B cell (primary cell): ENCODE measurements at regions of chr4 and their contacts with region 1.

Region 1: DNA sequence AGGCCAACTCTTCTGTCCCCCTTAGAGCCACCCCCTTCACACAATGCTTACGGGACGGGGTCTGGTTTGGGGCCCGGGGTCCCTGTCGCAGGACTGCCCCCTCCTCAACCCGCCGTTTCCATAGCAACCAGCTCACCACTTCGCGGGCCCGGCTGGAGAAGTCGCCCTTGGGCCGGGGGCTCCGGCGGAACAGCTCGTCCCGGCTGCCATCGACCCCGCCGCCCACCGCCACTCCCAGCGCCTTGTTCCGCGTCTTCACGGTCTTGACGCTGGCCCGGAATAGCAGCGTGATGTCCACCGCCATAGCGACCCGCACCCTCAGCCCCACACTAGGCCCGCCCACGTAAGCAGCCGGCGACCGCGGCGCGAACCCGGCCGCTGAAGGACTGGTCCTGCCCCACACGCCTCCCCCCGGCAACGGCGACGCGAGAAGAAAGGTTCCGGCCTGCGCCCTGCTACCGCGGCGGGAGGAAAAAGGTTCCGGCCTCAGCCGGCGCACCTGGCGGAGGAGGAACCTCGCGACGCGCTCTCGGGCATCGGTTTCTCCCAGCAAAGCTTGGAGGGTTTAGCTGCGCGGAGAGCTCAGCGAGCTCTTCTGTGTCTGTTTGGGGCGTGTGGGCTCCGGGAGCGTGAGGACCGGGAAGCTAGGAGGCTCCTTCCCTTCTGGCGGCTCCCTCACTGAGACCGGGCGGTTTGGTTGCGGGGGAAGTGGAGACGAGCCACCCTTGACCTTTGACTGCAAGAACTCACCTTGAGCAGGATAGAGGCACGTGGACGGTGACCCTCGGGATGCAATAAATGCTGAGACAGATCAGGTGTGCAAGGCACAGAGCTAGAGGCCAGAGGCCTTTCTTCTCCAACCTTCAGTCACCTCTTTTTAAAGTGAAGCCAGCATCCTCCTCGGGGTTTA is at the start of gene STX18:
- DNase-seq: peak; percentile 94
- ATAC-seq: peak; percentile 92
- H3K4me3 ChIP-seq: peak within 1 kb of the TSS; percentile 69 to 96 (median 90)
- H3K4me3 Mint-ChIP-seq: peak within 1 kb of the TSS; percentile 96
- H3K27ac ChIP-seq: peak within 1 kb of the TSS; percentile 77 to 93
- H3K27ac Mint-ChIP-seq: peak within 1 kb of the TSS; percentile 94
- H3K4me1 ChIP-seq: peaks cover 23 to 26% of the 10 kb centered on the region in 2 donors
- H3K4me1 Mint-ChIP-seq: peaks cover 42% of the 10 kb centered on the region
- H3K27me3 ChIP-seq: no peaks in the 10 kb centered on the region
- H3K27me3 Mint-ChIP-seq: no peaks in the 10 kb centered on the region
- CTCF ChIP-seq: peak; percentile 21
- total RNA-seq, gene STX18: 30.0 and 33.6 TPM in 2 replicates

Region 2: DNA sequence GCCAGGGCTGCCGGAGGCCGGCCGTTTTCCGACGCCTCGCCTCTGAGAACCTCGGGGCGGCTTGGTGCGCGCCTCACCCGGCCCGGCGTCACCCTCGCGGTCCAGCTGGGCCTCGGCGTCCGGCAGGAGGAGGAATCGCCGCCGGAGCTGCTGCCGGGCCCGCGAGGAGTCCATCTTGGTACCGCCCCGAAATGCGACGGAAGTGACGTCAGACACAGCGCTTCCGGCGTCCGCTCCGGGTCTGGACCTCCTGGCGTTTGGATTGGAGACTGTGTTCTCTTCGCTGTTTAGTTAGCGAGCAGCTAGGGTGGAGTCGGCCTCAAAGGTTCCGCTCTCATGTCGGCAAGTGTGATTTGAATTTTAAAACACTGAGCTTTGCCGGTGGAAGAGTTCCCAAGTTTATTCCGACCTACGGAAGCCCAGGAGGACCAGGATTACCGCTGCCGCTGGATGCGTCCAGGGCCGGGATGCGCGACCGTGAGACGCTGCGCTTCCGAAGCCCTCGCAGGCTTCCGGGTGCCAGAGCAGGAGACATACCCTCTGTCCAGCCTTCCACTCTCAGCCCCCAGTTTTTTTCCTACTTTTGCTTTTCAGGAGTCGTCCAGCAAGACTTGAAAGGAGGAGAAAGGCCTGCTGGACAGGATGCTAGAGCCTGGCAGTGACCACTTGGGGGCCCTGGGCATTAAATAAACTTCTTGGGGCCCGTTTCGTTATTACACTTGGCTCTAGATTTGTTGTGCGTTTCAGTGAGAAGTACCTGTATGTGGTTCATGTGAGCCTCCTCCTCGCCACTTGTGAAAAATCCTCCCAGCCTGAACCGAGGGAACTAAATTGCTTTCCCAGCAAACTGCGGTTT is 293.7 kb before region 1 on chr4 and contains the start of gene TMEM128:
- CTCF ChIA-PET with region 1: no interaction called
- POLR2A ChIA-PET with region 1: interaction called, 4 read pairs
- intact Hi-C with region 1: loop called (anchors 2 kb)
- DNase-seq: peak; percentile 96
- ATAC-seq: peak; percentile 96
- H3K4me3 ChIP-seq: peak within 1 kb of the TSS; percentile 67 to 98 (median 84)
- H3K4me3 Mint-ChIP-seq: peak within 1 kb of the TSS; percentile 88
- H3K27ac ChIP-seq: peak within 1 kb of the TSS; percentile 88
- H3K27ac Mint-ChIP-seq: peak within 1 kb of the TSS; percentile 97
- H3K4me1 ChIP-seq: peaks cover 14 to 17% of the 10 kb centered on the region in 2 donors
- H3K4me1 Mint-ChIP-seq: peaks cover 21% of the 10 kb centered on the region
- H3K27me3 ChIP-seq: peaks cover 0 to 4% (median 1%) of the 10 kb centered on the region in 4 experiments
- H3K27me3 Mint-ChIP-seq: peaks cover under 1% of the 10 kb centered on the region
- CTCF ChIP-seq: no peak
- total RNA-seq, gene TMEM128: 16.3 and 17.3 TPM in 2 replicates

Region 3: GRCh38 chr4:4289941-4290850 is 251.7 kb before region 1 on chr4 and contains the starts of genes LYAR and ZBTB49:
- CTCF ChIA-PET with region 1: no interaction called
- POLR2A ChIA-PET with region 1: interaction called, 3 read pairs
- intact Hi-C with region 1: loop called (anchors 1 kb)
- DNase-seq: peak; percentile 93
- ATAC-seq: peak; percentile 92
- H3K4me3 ChIP-seq: peak within 1 kb of the TSS; percentile 63 to 88 (median 74)
- H3K4me3 Mint-ChIP-seq: peak within 1 kb of the TSS; percentile 98
- H3K27ac ChIP-seq: peak within 1 kb of the TSS; percentile 47 to 76
- H3K27ac Mint-ChIP-seq: peak within 1 kb of the TSS; percentile 92
- H3K4me1 ChIP-seq: peaks cover 19 to 22% of the 10 kb centered on the region in 2 donors
- H3K4me1 Mint-ChIP-seq: peaks cover 46% of the 10 kb centered on the region
- H3K27me3 ChIP-seq: no peaks in the 10 kb centered on the region
- H3K27me3 Mint-ChIP-seq: no peaks in the 10 kb centered on the region
- CTCF ChIP-seq: no peak
- total RNA-seq, gene LYAR: 11.4 and 11.5 TPM in 2 replicates
- total RNA-seq, gene ZBTB49: 16.9 and 17.8 TPM in 2 replicates

Region 4: DNA sequence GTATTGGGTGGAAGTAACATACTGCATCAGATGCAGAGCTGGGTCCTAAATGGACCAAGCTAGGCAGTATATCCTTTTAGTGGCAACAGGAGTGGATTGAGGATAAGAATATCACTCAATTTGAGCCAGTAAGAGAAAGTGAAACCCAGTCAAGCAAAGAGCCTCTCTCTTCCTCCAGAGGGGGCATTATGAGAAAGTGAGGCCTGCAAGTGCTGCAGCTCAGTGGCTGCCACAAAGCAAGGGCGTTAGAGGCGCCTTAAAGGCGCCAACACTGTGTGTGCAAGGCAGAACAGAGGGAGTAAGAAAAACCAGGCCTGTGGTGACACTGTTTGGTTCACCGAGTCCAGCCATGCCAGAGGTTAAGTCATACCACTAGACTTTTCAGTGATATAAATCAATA is 17.6 kb before region 1 on chr4:
- CTCF ChIA-PET with region 1: interaction called, 4 read pairs
- POLR2A ChIA-PET with region 1: interaction called, 3 read pairs
- intact Hi-C with region 1: loop called (anchors 1 kb)
- DNase-seq: peak; percentile 75
- ATAC-seq: peak; percentile 96
- H3K4me3 ChIP-seq: peak overlapping the region in 1 of 5 experiments; percentile 31
- H3K4me3 Mint-ChIP-seq: peak overlapping the region; percentile 55
- H3K27ac ChIP-seq: peak overlapping the region; percentile 11 to 72
- H3K27ac Mint-ChIP-seq: peak overlapping the region; percentile 84
- H3K4me1 ChIP-seq: peaks cover 17% of the 10 kb centered on the region in 2 donors
- H3K4me1 Mint-ChIP-seq: peaks cover 40% of the 10 kb centered on the region
- H3K27me3 ChIP-seq: no peaks in the 10 kb centered on the region
- H3K27me3 Mint-ChIP-seq: no peaks in the 10 kb centered on the region
- CTCF ChIP-seq: no peak

Region 5: GRCh38 chr4:4575273-4576211 is 33.6 kb after region 1 on chr4:
- CTCF ChIA-PET with region 1: interaction called, 10 read pairs
- POLR2A ChIA-PET with region 1: no interaction called
- intact Hi-C with region 1: loop called (anchors 1 kb)
- DNase-seq: peak; percentile 81
- ATAC-seq: peak; percentile 83
- H3K4me3 ChIP-seq: peak overlapping the region; percentile 46 to 76 (median 65)
- H3K4me3 Mint-ChIP-seq: peak overlapping the region; percentile 85
- H3K27ac ChIP-seq: peak overlapping the region; percentile 37 to 72
- H3K27ac Mint-ChIP-seq: peak overlapping the region; percentile 81
- H3K4me1 ChIP-seq: peaks cover 11 to 12% of the 10 kb centered on the region in 2 donors
- H3K4me1 Mint-ChIP-seq: peaks cover 16% of the 10 kb centered on the region
- H3K27me3 ChIP-seq: no peaks in the 10 kb centered on the region
- H3K27me3 Mint-ChIP-seq: no peaks in the 10 kb centered on the region
- CTCF ChIP-seq: peak; percentile 56

Region 6: DNA sequence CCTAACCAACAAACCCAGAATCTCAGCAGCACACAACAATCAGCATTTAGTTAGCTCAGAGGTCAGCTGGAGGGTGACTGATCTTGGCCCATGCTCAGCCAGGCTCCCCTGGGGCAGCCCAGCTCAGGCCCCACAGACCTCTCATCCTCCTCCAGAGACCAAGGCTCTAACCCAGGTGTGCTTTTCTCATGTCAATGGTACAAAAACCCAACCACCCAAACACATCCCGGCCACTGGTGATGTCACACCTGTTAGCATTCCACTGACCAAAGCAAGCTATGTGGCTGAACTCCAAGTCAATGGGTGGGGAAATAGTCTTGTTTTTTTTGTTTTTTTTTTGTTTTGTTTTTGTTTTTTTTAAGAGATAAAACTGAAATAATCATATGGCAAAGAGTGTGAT is 399.8 kb after region 1 on chr4:
- CTCF ChIA-PET with region 1: no interaction called
- POLR2A ChIA-PET with region 1: no interaction called
- intact Hi-C with region 1: loop called (anchors 5 kb)
- DNase-seq: no peak
- ATAC-seq: no peak
- H3K4me3 ChIP-seq: no peak overlapping the region
- H3K4me3 Mint-ChIP-seq: peak overlapping the region; percentile 20
- H3K27ac ChIP-seq: no peak overlapping the region
- H3K27ac Mint-ChIP-seq: peak overlapping the region; percentile 74
- H3K4me1 ChIP-seq: peaks cover 36 to 40% of the 10 kb centered on the region in 2 donors
- H3K4me1 Mint-ChIP-seq: peaks cover 63% of the 10 kb centered on the region
- H3K27me3 ChIP-seq: no peaks in the 10 kb centered on the region
- H3K27me3 Mint-ChIP-seq: no peaks in the 10 kb centered on the region
- CTCF ChIP-seq: no peak

Region 7: GRCh38 chr4:6269616-6270511 is 1727.9 kb after region 1 on chr4 and contains the start of gene WFS1:
- CTCF ChIA-PET with region 1: no interaction called
- POLR2A ChIA-PET with region 1: no interaction called
- intact Hi-C with region 1: loop called (anchors 5 kb)
- DNase-seq: peak; percentile 99
- ATAC-seq: peak; percentile 99
- H3K4me3 ChIP-seq: peak within 1 kb of the TSS; percentile 13 to 95 (median 88)
- H3K4me3 Mint-ChIP-seq: peak within 1 kb of the TSS; percentile 92
- H3K27ac ChIP-seq: no peak within 1 kb of the TSS
- H3K27ac Mint-ChIP-seq: peak within 1 kb of the TSS; percentile 68
- H3K4me1 ChIP-seq: peaks cover 22 to 33% of the 10 kb centered on the region in 2 donors
- H3K4me1 Mint-ChIP-seq: peaks cover 32% of the 10 kb centered on the region
- H3K27me3 ChIP-seq: no peaks in the 10 kb centered on the region
- H3K27me3 Mint-ChIP-seq: peaks cover 1% of the 10 kb centered on the region
- CTCF ChIP-seq: no peak
- total RNA-seq, gene WFS1: 6.7 and 7.2 TPM in 2 replicates